Stomach (tissue), 19 donors: ENCODE measurements at regions of chr2 and their contacts with region 1.

Region 1: DNA sequence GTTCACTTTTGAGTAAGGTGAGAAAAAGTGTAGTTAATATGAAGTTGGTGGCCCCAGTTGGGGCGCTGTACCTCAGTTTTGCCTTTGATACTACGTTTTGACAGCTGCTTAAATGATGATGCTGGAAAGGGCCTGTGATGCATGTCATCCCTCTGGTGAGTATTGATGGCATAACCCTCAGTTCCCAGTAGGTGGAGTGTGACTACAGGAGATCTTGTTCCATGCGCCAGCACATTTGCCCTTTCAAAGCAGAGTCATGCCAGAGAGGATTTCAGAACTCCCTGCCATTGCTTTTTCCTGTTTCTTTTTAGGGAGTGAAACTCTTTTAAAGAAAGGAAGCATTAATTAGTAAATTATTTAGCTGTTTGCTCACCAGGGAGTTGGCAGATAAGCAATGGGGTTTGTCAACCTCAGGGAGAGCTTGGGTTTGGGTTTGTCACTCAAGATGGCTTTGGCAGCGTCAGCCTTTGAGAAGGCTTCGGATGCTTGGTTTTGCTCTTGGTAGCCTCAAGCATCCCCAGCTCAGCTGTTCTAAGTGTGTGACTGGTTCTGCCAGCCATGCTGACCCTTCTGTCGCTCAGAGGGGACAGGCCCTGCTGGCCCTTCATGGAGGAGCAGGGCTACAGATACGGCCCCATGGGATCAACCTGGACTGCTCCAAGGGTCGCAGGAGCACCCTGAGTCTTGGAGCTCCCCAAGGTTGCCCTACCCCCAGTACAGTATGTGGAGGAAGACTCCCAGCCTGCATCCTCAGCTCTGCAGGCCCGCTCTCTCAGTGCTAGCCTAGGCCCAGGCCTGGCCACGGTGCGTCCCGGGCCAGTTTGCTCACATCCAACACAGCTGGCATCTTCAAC is 29.1 kb downstream of the ARMC9 start:
- DNase-seq: peak; percentile 55 to 92
- H3K4me3 ChIP-seq: no peak overlapping the region
- H3K27ac ChIP-seq: peak overlapping the region in 3 of 5 donors; percentile 48 to 78 (median 78)
- H3K4me1 ChIP-seq: peaks cover 0 to 47% (median 24%) of the 10 kb centered on the region in 4 donors
- H3K27me3 ChIP-seq: no peaks in the 10 kb centered on the region
- CTCF ChIP-seq: peak in 5 of 7 experiments; percentile 61 to 89 (median 76)
- EP300 ChIP-seq: no peak
- POLR2A ChIP-seq: no peak

Region 2: GRCh38 chr2:231411831-231412617 is 184.5 kb after region 1 on chr2:
- intact Hi-C with region 1: loop called (anchors 5 kb)
- DNase-seq: peak; percentile 87 to 94
- H3K4me3 ChIP-seq: peak overlapping the region; percentile 57 to 73 (median 60)
- H3K27ac ChIP-seq: peak overlapping the region; percentile 56 to 89 (median 67)
- H3K4me1 ChIP-seq: peaks cover 0 to 28% (median 16%) of the 10 kb centered on the region in 4 donors
- H3K27me3 ChIP-seq: peaks cover 0 to 9% (median 5%) of the 10 kb centered on the region in 3 donors
- CTCF ChIP-seq: peak in 5 of 7 experiments; percentile 71 to 88 (median 78)
- EP300 ChIP-seq: no peak
- POLR2A ChIP-seq: no peak